Activated T-helper 2 cell treated with anti-CD3 and anti-CD28 coated beads, Interferon-gamma antibody, Interleukin-2, Interleukin-4, amounts not matched to agents 10 μg/mL and 5 μg/mL and 100 μg/mL, durations not matched to agents 14 hours and 24 hours and 36 hours (primary cell): ENCODE measurements at regions of chr1 and their contacts with region 1.

Region 1: GRCh38 chr1:154747740-154748404 is 122.2 kb downstream of the KCNN3 start:
- DNase-seq: peak; percentile 58
- H3K4me3 Mint-ChIP-seq: peak overlapping the region; percentile 83
- H3K27ac Mint-ChIP-seq: peak overlapping the region; percentile 91
- H3K4me1 Mint-ChIP-seq: peaks cover 73% of the 10 kb centered on the region
- H3K27me3 Mint-ChIP-seq: no peaks in the 10 kb centered on the region

Region 2: DNA sequence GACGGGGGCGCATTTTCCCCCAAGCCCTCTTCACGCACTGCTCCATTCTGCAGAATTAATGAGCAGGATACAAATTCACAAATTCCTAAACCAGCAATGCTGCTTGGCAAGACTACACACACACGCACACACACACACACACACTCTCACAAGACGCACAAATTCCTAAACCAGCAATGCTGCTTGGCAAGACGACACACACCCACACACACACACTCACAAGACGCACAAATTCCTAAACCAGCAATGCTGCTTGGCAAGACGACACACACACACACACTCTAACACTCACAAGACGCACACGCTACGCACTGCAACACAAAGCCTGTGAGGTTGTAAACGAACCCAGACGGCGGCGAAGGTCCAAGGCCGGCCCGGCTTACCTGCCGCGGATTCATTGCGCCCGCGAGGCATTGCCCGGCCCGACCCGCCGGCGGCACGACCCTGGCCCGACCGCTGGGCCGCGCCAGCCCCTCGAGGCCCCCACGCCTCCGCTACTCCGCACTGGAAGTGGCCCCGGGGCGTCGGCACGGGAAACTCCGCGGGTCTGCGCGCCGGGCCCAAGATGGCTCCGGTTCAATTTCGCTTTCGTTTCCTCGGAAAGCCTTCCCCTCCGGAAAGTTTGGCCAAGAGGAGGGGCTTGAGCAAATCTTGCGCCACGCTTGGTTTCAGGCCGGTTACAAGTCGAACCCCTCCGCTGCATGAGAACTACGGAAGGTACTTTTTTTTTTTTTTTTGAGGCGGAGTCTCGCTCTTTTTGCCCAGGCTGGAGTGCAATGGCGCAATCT is 140.1 kb before region 1 on chr1 and contains the start of gene ADAR:
- intact Hi-C with region 1: loop called (anchors 5 kb)
- DNase-seq: peak; percentile 92
- H3K4me3 Mint-ChIP-seq: peak within 1 kb of the TSS; percentile 98
- H3K27ac Mint-ChIP-seq: peak within 1 kb of the TSS; percentile 98
- H3K4me1 Mint-ChIP-seq: peaks cover 65% of the 10 kb centered on the region
- H3K27me3 Mint-ChIP-seq: no peaks in the 10 kb centered on the region
- total RNA-seq, gene ADAR: 267 and 282 TPM in 2 replicates

Region 3: GRCh38 chr1:154627257-154628120 is 120.4 kb before region 1 on chr1:
- intact Hi-C with region 1: loop called (anchors 5 kb)
- DNase-seq: peak; percentile 86
- H3K4me3 Mint-ChIP-seq: peak overlapping the region; percentile 99
- H3K27ac Mint-ChIP-seq: peak overlapping the region; percentile 98
- H3K4me1 Mint-ChIP-seq: peaks cover 37% of the 10 kb centered on the region
- H3K27me3 Mint-ChIP-seq: peaks cover 17% of the 10 kb centered on the region

Region 4: GRCh38 chr1:154669464-154670282 is 78.2 kb before region 1 on chr1:
- intact Hi-C with region 1: loop called (anchors 1 kb)
- DNase-seq: peak; percentile 63
- H3K4me3 Mint-ChIP-seq: no peak overlapping the region
- H3K27ac Mint-ChIP-seq: no peak overlapping the region
- H3K4me1 Mint-ChIP-seq: peaks cover 9% of the 10 kb centered on the region
- H3K27me3 Mint-ChIP-seq: peaks cover 2% of the 10 kb centered on the region

Region 5: DNA sequence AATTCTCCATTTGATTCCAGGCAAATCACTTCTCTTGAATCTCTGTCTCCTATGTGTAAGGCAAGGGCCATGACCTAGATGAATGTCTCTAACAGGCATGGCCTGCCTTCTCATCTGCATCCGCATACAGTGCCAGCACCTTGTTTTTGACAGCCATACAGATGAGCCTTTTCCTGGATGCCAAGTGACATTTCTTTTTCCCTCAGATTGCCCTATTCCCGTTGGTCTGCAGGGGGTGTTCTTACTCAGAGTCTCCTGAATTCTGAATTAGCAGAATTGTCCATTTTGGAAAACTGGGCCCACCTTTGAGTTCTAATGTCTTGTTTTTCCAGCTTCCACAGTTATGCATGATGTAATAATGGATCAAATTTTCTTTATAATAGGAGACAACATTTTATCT is 51.9 kb before region 1 on chr1:
- intact Hi-C with region 1: loop called (anchors 10 kb)
- DNase-seq: no peak
- H3K4me3 Mint-ChIP-seq: no peak overlapping the region
- H3K27ac Mint-ChIP-seq: no peak overlapping the region
- H3K4me1 Mint-ChIP-seq: peaks cover 13% of the 10 kb centered on the region
- H3K27me3 Mint-ChIP-seq: peaks cover 11% of the 10 kb centered on the region

Region 6: DNA sequence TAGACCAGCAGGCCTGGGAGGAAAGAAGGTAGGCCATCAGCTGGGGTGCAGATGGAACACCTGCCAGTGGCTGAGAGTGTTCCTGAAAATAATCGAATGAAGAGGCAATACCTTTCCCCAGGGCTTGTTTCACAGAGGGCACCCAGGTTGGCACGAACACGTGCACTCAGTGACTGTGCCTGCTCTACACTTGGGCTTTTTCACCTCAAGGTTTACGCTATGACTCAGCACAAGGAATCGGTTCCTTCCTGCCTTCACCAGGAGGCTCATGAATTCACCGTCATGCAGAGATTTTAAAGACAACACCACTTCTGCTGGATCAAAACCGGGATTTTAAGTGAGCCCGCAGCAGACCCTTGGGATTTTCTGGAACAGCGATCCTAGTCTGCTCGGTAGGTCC is 21.4 kb before region 1 on chr1:
- intact Hi-C with region 1: no loop called
- DNase-seq: no peak
- H3K4me3 Mint-ChIP-seq: no peak overlapping the region
- H3K27ac Mint-ChIP-seq: no peak overlapping the region
- H3K4me1 Mint-ChIP-seq: peaks cover 51% of the 10 kb centered on the region
- H3K27me3 Mint-ChIP-seq: no peaks in the 10 kb centered on the region

Region 7: GRCh38 chr1:154736841-154737240 is 11.0 kb before region 1 on chr1:
- intact Hi-C with region 1: loop called (anchors 1 kb)
- DNase-seq: no peak
- H3K4me3 Mint-ChIP-seq: no peak overlapping the region
- H3K27ac Mint-ChIP-seq: peak overlapping the region; percentile 93
- H3K4me1 Mint-ChIP-seq: peaks cover 58% of the 10 kb centered on the region
- H3K27me3 Mint-ChIP-seq: no peaks in the 10 kb centered on the region

Region 8: DNA sequence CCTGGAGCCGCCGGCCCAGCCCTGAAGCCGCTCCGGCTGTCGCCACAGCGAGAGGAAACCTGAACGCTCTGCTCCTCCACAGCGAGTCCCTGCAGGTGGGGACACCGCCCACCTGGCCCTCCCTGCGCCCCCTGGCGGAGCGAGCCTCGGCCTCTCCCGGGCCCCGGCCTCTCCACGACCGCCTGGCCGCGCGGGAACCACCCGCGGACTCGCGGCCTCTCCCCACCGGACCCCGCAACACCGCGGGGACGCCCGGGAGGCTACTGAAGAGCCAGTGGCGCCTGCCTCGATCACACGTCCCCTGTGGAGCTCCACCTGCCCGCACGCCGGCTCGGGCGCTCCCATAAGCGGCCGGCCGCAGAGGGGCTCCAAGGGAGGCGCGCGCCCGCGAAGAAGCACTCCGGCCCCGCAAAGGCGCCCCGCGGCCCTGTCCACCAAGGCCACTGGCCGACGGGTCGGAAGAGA is 12.6 kb after region 1 on chr1:
- intact Hi-C with region 1: loop called (anchors 1 kb)
- DNase-seq: peak; percentile 72
- H3K4me3 Mint-ChIP-seq: peak overlapping the region; percentile 74
- H3K27ac Mint-ChIP-seq: peak overlapping the region; percentile 95
- H3K4me1 Mint-ChIP-seq: peaks cover 47% of the 10 kb centered on the region
- H3K27me3 Mint-ChIP-seq: peaks cover 16% of the 10 kb centered on the region

Region 9: GRCh38 chr1:154772606-154773506 is 25.0 kb after region 1 on chr1:
- intact Hi-C with region 1: no loop called
- DNase-seq: no peak
- H3K4me3 Mint-ChIP-seq: no peak overlapping the region
- H3K27ac Mint-ChIP-seq: no peak overlapping the region
- H3K4me1 Mint-ChIP-seq: peaks cover 9% of the 10 kb centered on the region
- H3K27me3 Mint-ChIP-seq: no peaks in the 10 kb centered on the region